SK-N-SH (cell line): ENCODE measurements at regions of chr1 and their contacts with region 1.

Region 1: DNA sequence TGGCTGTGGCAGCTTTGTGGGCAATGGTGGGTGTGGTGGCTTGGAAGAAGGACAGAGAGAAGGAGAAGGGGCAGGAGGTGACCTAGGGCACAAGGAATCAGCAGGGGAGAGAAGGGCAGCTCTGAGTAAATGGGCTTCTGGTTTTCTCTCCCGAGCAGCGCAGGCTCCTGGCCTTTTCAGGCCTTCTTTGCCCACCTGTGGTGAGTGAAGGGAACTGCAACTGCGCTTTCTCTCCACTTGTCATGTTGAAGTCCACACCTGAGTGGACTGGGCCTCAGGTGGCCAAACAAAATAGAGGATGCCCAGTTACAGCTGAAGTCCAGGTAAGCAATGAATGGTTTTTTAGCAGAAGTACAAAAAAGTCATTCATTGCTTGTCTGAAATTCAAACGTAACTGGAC is 29.4 kb upstream of the KCNA10 start:
- DNase-seq: peak; percentile 51
- H3K4me3 ChIP-seq: no peak overlapping the region
- H3K27ac ChIP-seq: no peak overlapping the region
- H3K4me1 ChIP-seq: no peaks in the 10 kb centered on the region
- H3K27me3 ChIP-seq: peaks cover 9% of the 10 kb centered on the region; the same call in 1 of the 2 replicates
- CTCF ChIP-seq: peak; percentile 39
- EP300 ChIP-seq: no peak
- RAD21 ChIP-seq: peak; percentile 59

Region 2: GRCh38 chr1:110337704-110338308 is 210.6 kb before region 1 on chr1:
- CTCF ChIA-PET with region 1: no interaction called
- POLR2A ChIA-PET with region 1: no interaction called
- DNase-seq: peak; percentile 34
- H3K4me3 ChIP-seq: peak overlapping the region; percentile 81 to 99
- H3K27ac ChIP-seq: peak overlapping the region; percentile 98 to 99
- H3K4me1 ChIP-seq: peaks cover 26 to 41% of the 10 kb centered on the region in 2 experiments
- H3K27me3 ChIP-seq: no peaks in the 10 kb centered on the region
- CTCF ChIP-seq: no peak
- EP300 ChIP-seq: no peak
- RAD21 ChIP-seq: no peak

Region 3: DNA sequence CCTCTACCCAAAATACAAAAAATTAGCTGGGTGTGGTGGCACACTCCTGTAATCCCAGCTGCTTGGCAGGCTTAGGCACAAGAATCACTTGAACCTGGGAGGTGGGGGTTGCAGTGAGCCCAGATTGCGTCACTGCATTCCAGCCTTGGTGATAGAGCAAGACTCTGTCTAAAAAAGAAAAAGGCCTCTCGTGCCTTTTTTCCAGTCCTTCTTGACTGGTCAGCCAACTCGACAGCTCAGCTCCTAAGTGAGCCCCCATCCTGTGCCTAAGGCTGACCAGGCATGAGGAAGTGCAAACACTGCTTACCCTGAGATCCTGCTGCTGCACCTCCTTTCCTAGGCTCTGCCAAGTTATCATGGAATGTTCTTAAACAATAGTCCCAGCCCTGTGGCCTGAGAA is 107.5 kb before region 1 on chr1:
- CTCF ChIA-PET with region 1: no interaction called
- POLR2A ChIA-PET with region 1: no interaction called
- DNase-seq: no peak
- H3K4me3 ChIP-seq: no peak overlapping the region
- H3K27ac ChIP-seq: no peak overlapping the region
- H3K4me1 ChIP-seq: no peaks in the 10 kb centered on the region
- H3K27me3 ChIP-seq: peaks cover 17% of the 10 kb centered on the region; the same call in 1 of the 2 replicates
- CTCF ChIP-seq: no peak
- EP300 ChIP-seq: no peak
- RAD21 ChIP-seq: no peak

Region 4: GRCh38 chr1:110535985-110536384 is 12.4 kb before region 1 on chr1:
- CTCF ChIA-PET with region 1: interaction called, 48 read pairs
- POLR2A ChIA-PET with region 1: no interaction called
- DNase-seq: no peak
- H3K4me3 ChIP-seq: no peak overlapping the region
- H3K27ac ChIP-seq: no peak overlapping the region
- H3K4me1 ChIP-seq: no peaks in the 10 kb centered on the region; a peak in 1 of 4 replicates
- H3K27me3 ChIP-seq: no peaks in the 10 kb centered on the region
- CTCF ChIP-seq: no peak
- EP300 ChIP-seq: no peak
- RAD21 ChIP-seq: no peak

Region 5: DNA sequence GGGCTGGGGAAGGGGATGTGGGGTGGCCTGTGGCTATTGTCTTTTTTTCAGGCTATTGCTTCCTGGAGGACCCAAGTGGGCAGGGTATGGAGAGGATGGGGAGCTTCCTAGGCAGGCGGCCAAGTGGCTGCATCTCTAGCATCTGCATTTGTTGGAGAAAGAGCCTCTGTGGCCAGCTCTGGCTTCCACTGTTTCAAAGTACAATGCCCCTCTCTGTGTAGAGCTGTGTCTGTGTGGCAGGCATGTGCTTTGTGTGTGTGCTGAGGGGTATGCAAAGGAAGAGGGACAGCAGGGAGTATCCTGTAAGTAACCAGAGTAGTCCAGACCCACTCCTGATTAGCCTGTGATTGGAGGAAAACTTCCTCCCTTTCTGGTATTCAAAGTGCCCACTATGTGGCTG is 17.2 kb after region 1 on chr1:
- CTCF ChIA-PET with region 1: interaction called, 19 read pairs
- POLR2A ChIA-PET with region 1: no interaction called
- DNase-seq: no peak
- H3K4me3 ChIP-seq: no peak overlapping the region
- H3K27ac ChIP-seq: no peak overlapping the region
- H3K4me1 ChIP-seq: no peaks in the 10 kb centered on the region; a peak in 1 of 4 replicates
- H3K27me3 ChIP-seq: no peaks in the 10 kb centered on the region
- CTCF ChIP-seq: no peak
- EP300 ChIP-seq: no peak
- RAD21 ChIP-seq: no peak